ENCODE measurements at regions of chr1 and their contacts with region 1.

Region 1: GRCh38 chr1:23577056-23578004 is 18.0 kb upstream of the ID3 start:
- DNase-seq: no peak
- ATAC-seq: peak; percentile 74
- H3K4me3 ChIP-seq: no peak overlapping the region
- H3K4me3 Mint-ChIP-seq: peak overlapping the region; percentile 50
- H3K27ac ChIP-seq: peak overlapping the region; percentile 7 to 10
- H3K27ac Mint-ChIP-seq: peak overlapping the region; percentile 87
- H3K4me1 ChIP-seq: peaks cover 60% of the 10 kb centered on the region
- H3K4me1 Mint-ChIP-seq: peaks cover 62% of the 10 kb centered on the region
- H3K27me3 ChIP-seq: no peaks in the 10 kb centered on the region
- H3K27me3 Mint-ChIP-seq: no peaks in the 10 kb centered on the region
- CTCF ChIP-seq: no peak

Region 2: DNA sequence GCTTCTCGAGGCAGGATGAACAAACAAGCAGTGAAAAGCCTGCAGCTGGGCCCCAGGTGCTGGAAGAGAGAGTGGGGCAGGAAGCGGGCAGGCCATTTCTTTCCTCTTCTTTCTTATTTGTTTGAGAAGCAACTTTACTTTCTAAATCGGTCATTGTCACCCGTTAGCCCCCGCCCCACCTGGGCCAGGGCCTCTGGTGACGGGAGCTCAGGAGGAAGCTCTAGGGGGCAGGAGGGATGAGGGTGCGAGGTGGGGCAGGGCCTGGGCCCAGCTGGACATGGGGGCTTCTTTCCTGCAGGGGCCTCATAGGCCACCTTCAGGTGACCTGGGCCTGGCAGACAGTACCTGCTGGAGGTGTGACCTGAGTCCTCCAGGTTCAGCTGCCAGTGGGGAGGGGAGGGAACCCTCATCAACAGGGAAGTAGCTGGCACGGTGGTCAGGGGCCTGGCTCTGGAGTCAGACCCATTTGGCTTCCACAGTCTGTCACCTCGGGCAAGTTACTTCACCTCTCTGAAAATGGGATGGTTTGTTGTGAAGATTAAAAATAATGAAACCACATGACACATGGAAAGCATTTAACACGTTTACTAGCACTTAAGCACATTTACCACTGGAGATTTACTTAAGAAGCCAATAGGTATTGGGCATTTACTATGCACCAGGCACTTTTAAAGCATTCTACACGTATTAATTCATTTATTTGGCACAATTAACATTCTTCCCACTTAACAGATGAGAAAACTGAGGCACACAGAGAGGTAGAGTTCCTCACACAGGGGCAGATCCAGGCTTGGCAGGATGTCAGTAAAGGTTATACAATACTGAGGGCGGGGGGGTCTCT is 36.1 kb after region 1 on chr1:
- CTCF ChIA-PET with region 1: interaction called, 4 read pairs
- POLR2A ChIA-PET with region 1: interaction called, 9 read pairs
- intact Hi-C with region 1: loop called in 1 of 2 experiments (anchors 5 kb)
- DNase-seq: peak in 7 of 9 experiments; percentile 33 to 78 (median 61)
- ATAC-seq: peak; percentile 61
- H3K4me3 ChIP-seq: peak overlapping the region in 1 of 2 experiments; percentile 8
- H3K4me3 Mint-ChIP-seq: peak overlapping the region; percentile 54
- H3K27ac ChIP-seq: peak overlapping the region; percentile 40 to 72
- H3K27ac Mint-ChIP-seq: peak overlapping the region; percentile 90
- H3K4me1 ChIP-seq: peaks cover 65% of the 10 kb centered on the region
- H3K4me1 Mint-ChIP-seq: peaks cover 83% of the 10 kb centered on the region
- H3K27me3 ChIP-seq: no peaks in the 10 kb centered on the region
- H3K27me3 Mint-ChIP-seq: no peaks in the 10 kb centered on the region
- CTCF ChIP-seq: no peak

Measured in CD8-positive, alpha-beta T cell (primary cell).